Right ventricle myocardium inferior (tissue), 1 donor: ENCODE measurements at regions of chr5 and their contacts with region 1.

Region 1: DNA sequence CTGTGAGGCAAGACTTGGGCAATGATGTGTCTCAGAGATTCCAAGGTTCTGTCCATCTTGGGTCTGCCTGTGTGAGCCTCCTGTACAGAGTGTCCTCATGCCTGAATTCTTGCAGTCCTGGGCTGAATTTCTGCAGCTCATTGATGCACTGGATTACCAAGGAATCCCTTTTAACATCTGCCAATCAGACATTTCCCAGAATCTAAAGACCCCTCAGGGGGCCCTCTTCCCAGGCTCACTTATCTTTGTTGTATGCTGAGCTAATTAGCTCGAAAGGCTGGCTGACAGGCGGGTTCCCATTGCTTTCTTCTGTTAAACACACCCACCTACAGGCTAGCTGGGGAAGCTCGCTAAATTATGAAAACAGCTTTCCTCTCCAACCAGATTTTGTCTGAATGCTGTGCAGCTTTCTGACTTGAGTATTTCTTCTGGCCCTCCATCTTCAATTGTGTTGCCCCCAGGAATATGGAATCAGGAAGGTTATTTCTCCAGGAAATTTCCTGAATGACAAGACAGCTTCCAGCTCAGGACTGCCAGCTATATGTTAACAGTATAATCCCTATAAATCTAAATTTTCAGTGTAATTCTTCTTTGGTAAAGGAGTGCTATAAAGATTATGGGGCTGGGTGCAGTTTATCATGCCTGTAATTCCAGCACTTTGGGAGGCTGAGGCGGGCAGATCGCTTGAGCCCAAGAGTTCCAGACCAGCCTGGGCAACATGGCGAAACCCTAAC is at the start of gene LIX1:
- DNase-seq: no peak
- ATAC-seq: peak; percentile 69
- total RNA-seq, gene LIX1: not detected

Region 2: GRCh38 chr5:96868603-96869371 is 273.9 kb before region 1 on chr5:
- intact Hi-C with region 1: loop called (anchors 5 kb)
- DNase-seq: no peak
- ATAC-seq: peak; percentile 79

Region 3: GRCh38 chr5:96984506-96985192 is 158.0 kb before region 1 on chr5:
- intact Hi-C with region 1: no loop called
- DNase-seq: no peak
- ATAC-seq: no peak

Region 4: GRCh38 chr5:97044052-97044451 is 98.6 kb before region 1 on chr5:
- intact Hi-C with region 1: loop called (anchors 5 kb)
- DNase-seq: no peak
- ATAC-seq: peak; percentile 60

Region 5: GRCh38 chr5:97425511-97425910 is 282.8 kb after region 1 on chr5:
- intact Hi-C with region 1: no loop called
- DNase-seq: no peak
- ATAC-seq: no peak